Activated CD4-positive, alpha-beta memory T cell treated with anti-CD3 and anti-CD28 coated beads for 36 hours (primary cell): ENCODE measurements at regions of chrX and their contacts with region 1.

Region 1: GRCh38 chrX:148049441-148049840 is 68.3 kb downstream of the FMR1NB start:
- DNase-seq: no peak
- H3K4me3 Mint-ChIP-seq: no peak overlapping the region
- H3K27ac Mint-ChIP-seq: no peak overlapping the region
- H3K4me1 Mint-ChIP-seq: no peaks in the 10 kb centered on the region
- H3K27me3 Mint-ChIP-seq: no peaks in the 10 kb centered on the region

Region 2: DNA sequence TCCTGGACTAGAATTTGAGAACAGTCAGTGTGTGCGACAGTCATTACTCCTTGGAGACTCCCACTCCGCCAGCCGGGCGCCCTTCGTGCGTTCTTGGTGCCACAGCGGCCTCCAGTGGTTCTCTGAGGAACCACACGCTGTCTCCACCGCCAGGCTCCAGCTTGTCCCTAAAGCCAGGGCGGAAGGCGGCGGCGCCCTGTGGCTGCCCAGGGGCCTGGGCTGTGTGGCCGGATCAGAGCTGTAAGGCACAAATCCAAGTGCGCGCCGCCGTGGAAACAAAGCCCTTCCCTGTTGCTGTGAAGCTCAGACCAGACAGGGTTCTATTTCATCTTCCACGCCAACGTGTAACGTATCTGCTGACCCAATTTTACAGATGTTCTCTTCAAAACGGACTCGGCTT is 1421.5 kb after region 1 on chrX:
- CTCF ChIA-PET with region 1: interaction called, 8 read pairs
- POLR2A ChIA-PET with region 1: no interaction called
- intact Hi-C with region 1: loop called (anchors 1 kb)
- DNase-seq: peak; percentile 76
- H3K4me3 Mint-ChIP-seq: no peak overlapping the region
- H3K27ac Mint-ChIP-seq: no peak overlapping the region
- H3K4me1 Mint-ChIP-seq: no peaks in the 10 kb centered on the region
- H3K27me3 Mint-ChIP-seq: no peaks in the 10 kb centered on the region